ENCODE measurements at regions of chr11 and their contacts with region 1.

Region 1: GRCh38 chr11:46529095-46529905 is 64.5 kb downstream of the AMBRA1 start:
- DNase-seq: no peak
- ATAC-seq: peak; percentile 98
- H3K4me3 ChIP-seq: no peak overlapping the region
- H3K27ac ChIP-seq: 0 out of 2 replicates have a peak overlapping the region, but pooled peaks have one; percentile 4
- H3K4me1 ChIP-seq: no peaks in the 10 kb centered on the region; the same call in 1 of the 2 replicates
- H3K27me3 ChIP-seq: no peaks in the 10 kb centered on the region
- CTCF ChIP-seq: peak; percentile 88 to 94 (median 93); a peak in 5 of 6 replicates
- EP300 ChIP-seq: no peak
- POLR2A ChIP-seq: no peak
- RAD21 ChIP-seq: peak; percentile 70

Region 2: GRCh38 chr11:46352063-46352841 is 177.0 kb before region 1 on chr11:
- CTCF ChIA-PET with region 1: interaction called, 15 read pairs
- POLR2A ChIA-PET with region 1: no interaction called
- RAD21 ChIA-PET with region 1: interaction called, 3 read pairs
- SMC1A ChIA-PET with region 1: no interaction called
- in situ Hi-C with region 1: no loop called
- intact Hi-C with region 1: no loop called
- DNase-seq: no peak
- ATAC-seq: peak; percentile 29
- H3K4me3 ChIP-seq: no peak overlapping the region
- H3K27ac ChIP-seq: no peak overlapping the region
- H3K4me1 ChIP-seq: peaks cover 30% of the 10 kb centered on the region
- H3K27me3 ChIP-seq: no peaks in the 10 kb centered on the region
- CTCF ChIP-seq: peak; percentile 86 to 97 (median 87)
- EP300 ChIP-seq: no peak
- POLR2A ChIP-seq: no peak
- RAD21 ChIP-seq: peak; percentile 50

Region 3: GRCh38 chr11:46410021-46410420 is 119.3 kb before region 1 on chr11:
- CTCF ChIA-PET with region 1: interaction called, 12 read pairs
- POLR2A ChIA-PET with region 1: no interaction called
- RAD21 ChIA-PET with region 1: interaction called, 5 read pairs
- SMC1A ChIA-PET with region 1: interaction called, 7 read pairs
- in situ Hi-C with region 1: no loop called
- intact Hi-C with region 1: no loop called
- DNase-seq: no peak
- ATAC-seq: no peak
- H3K4me3 ChIP-seq: no peak overlapping the region
- H3K27ac ChIP-seq: no peak overlapping the region
- H3K4me1 ChIP-seq: no peaks in the 10 kb centered on the region
- H3K27me3 ChIP-seq: no peaks in the 10 kb centered on the region
- CTCF ChIP-seq: peak in 1 of 3 experiments; percentile 26; a peak in 1 of 6 replicates
- EP300 ChIP-seq: no peak
- POLR2A ChIP-seq: no peak
- RAD21 ChIP-seq: peak; percentile 8; the same call in 1 of the 2 replicates

Region 4: DNA sequence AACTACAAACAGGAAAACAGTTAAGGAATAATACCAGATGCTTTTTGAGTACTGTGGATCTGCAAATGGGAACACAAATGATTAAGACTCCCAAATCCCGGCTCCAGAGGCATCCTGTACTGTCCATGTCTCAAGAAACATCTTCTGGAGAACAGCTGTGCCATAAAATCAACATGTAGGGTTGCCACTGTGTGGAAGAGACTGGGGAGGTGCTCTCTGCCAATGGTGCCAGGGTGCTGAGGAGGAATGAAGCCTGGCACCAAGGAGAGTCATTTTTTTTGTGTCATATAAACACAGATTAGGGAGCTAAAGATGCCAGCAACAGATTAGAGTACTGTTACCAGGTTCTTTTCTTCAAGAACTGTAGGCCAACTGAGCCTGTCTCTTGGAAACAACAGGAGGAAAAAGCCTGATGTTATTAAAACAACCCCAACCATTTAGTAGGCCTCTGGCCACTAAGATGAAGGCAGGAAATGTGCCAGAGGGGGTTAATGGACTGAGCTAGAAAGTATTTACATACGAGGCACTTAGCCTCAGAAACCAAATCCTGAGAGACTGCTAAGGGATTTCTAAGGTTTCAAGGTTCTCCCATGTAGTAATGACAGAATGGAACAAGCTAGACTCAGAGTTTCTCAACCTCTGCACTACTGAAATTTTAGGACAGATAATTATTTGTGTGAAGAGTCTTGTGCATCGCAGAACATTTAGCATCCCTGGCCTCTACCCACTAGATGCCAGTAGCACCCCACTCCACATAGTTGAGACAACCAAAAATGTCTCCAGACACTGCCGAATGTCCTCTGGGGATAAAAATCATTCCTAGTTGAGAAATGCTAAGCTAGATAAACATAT is 83.2 kb before region 1 on chr11:
- CTCF ChIA-PET with region 1: interaction called, 41 read pairs
- POLR2A ChIA-PET with region 1: interaction called, 4 read pairs
- RAD21 ChIA-PET with region 1: interaction called, 16 read pairs
- SMC1A ChIA-PET with region 1: interaction called, 14 read pairs
- in situ Hi-C with region 1: no loop called
- intact Hi-C with region 1: loop called (anchors 1 kb)
- DNase-seq: no peak
- ATAC-seq: peak; percentile 54; the same call in 2 of the 3 replicates
- H3K4me3 ChIP-seq: no peak overlapping the region
- H3K27ac ChIP-seq: no peak overlapping the region
- H3K4me1 ChIP-seq: no peaks in the 10 kb centered on the region
- H3K27me3 ChIP-seq: no peaks in the 10 kb centered on the region
- CTCF ChIP-seq: peak; percentile 17 to 47 (median 41); a peak in 4 of 6 replicates
- EP300 ChIP-seq: no peak
- POLR2A ChIP-seq: no peak
- RAD21 ChIP-seq: peak; percentile 50

Region 5: GRCh38 chr11:46484101-46484500 is 45.2 kb before region 1 on chr11:
- CTCF ChIA-PET with region 1: interaction called, 146 read pairs
- POLR2A ChIA-PET with region 1: interaction called, 11 read pairs
- RAD21 ChIA-PET with region 1: interaction called, 67 read pairs
- SMC1A ChIA-PET with region 1: interaction called, 108 read pairs
- in situ Hi-C with region 1: no loop called
- intact Hi-C with region 1: no loop called
- DNase-seq: no peak
- ATAC-seq: no peak
- H3K4me3 ChIP-seq: no peak overlapping the region
- H3K27ac ChIP-seq: peak overlapping the region; percentile 41
- H3K4me1 ChIP-seq: peaks cover 3% of the 10 kb centered on the region
- H3K27me3 ChIP-seq: no peaks in the 10 kb centered on the region
- CTCF ChIP-seq: no peak
- EP300 ChIP-seq: no peak
- POLR2A ChIP-seq: no peak
- RAD21 ChIP-seq: no peak

Region 6: GRCh38 chr11:46547579-46547978 is 18.3 kb after region 1 on chr11:
- CTCF ChIA-PET with region 1: interaction called, 11 read pairs
- POLR2A ChIA-PET with region 1: no interaction called
- RAD21 ChIA-PET with region 1: no interaction called
- SMC1A ChIA-PET with region 1: interaction called, 3 read pairs
- in situ Hi-C with region 1: no loop called
- intact Hi-C with region 1: no loop called
- DNase-seq: no peak
- ATAC-seq: no peak
- H3K4me3 ChIP-seq: no peak overlapping the region
- H3K27ac ChIP-seq: no peak overlapping the region
- H3K4me1 ChIP-seq: no peaks in the 10 kb centered on the region
- H3K27me3 ChIP-seq: no peaks in the 10 kb centered on the region
- CTCF ChIP-seq: no peak
- EP300 ChIP-seq: no peak
- POLR2A ChIP-seq: no peak
- RAD21 ChIP-seq: no peak

Region 7: DNA sequence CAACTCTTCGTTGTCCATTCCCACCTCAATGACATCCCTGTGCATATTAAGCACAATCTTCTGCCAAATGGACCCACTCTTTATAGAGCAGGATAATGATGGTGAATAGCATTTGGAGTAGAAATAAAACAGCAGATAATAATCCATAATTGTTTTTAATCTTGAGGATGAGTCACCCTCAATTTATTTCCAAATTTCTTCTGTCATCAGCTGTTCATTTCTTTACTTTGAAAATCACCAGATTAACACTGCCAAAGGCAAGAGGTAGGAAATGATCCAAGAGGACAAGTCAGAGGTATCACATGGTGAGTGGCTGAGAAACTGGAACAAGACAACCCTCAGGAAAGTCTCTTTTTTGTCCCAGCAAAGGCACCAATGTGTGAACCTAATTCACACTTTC is 71.8 kb after region 1 on chr11:
- CTCF ChIA-PET with region 1: no interaction called
- POLR2A ChIA-PET with region 1: no interaction called
- RAD21 ChIA-PET with region 1: no interaction called
- SMC1A ChIA-PET with region 1: no interaction called
- in situ Hi-C with region 1: no loop called
- intact Hi-C with region 1: no loop called
- DNase-seq: no peak
- ATAC-seq: no peak
- H3K4me3 ChIP-seq: no peak overlapping the region
- H3K27ac ChIP-seq: no peak overlapping the region
- H3K4me1 ChIP-seq: peaks cover 16% of the 10 kb centered on the region
- H3K27me3 ChIP-seq: no peaks in the 10 kb centered on the region
- CTCF ChIP-seq: no peak
- EP300 ChIP-seq: no peak
- POLR2A ChIP-seq: no peak
- RAD21 ChIP-seq: no peak

Region 8: DNA sequence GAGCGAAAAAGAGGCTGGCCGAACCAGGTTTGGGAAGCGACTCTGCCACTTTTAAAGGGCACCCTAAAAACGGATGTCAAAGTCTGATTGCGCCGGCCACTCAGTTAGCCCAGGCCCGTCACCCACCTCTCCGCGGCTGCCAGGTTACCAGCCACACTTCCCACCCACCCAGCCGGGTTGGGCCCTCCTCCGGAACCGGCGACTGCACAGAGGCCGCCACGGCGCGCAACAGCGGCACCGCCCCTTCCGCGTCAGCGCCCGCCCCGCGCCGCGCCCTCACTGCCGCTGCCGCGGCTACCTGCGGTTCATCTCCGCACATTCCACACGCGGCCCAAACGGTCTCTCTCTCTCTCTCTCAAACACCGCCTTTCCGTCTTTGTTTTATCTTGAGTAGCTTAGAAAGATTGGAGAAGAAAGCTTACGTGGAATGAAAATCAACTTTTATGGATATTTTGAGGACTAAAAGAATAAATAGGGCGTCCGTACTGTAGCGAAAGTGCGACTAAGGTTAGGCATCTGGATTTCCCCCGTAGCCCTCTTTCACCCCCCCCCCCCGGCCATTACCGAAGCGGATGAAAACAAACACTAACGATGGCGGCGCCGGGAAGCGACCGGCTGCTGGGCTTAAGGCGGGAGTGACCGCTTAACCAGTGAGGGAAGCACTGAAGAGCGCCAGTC is 87.8 kb after region 1 on chr11 and contains the starts of genes ATG13 and HARBI1:
- CTCF ChIA-PET with region 1: interaction called, 15 read pairs
- POLR2A ChIA-PET with region 1: interaction called, 5 read pairs
- RAD21 ChIA-PET with region 1: interaction called, 4 read pairs
- SMC1A ChIA-PET with region 1: interaction called, 5 read pairs
- in situ Hi-C with region 1: no loop called
- intact Hi-C with region 1: no loop called
- DNase-seq: peak; percentile 55
- ATAC-seq: peak; percentile 98
- H3K4me3 ChIP-seq: peak within 1 kb of the TSS; percentile 82
- H3K27ac ChIP-seq: peak within 1 kb of the TSS; percentile 99
- H3K4me1 ChIP-seq: peaks cover 7% of the 10 kb centered on the region; the same call in 1 of the 2 replicates
- H3K27me3 ChIP-seq: no peaks in the 10 kb centered on the region
- CTCF ChIP-seq: no peak
- EP300 ChIP-seq: peak in 1 of 2 experiments; percentile 100; a peak in 2 of 4 replicates
- POLR2A ChIP-seq: peak; percentile 85
- RAD21 ChIP-seq: no peak
- polyA plus RNA-seq, gene ATG13: 10.9 to 13.6 TPM
- polyA plus RNA-seq, gene HARBI1: 5.1 to 7.5 TPM

Region 9: DNA sequence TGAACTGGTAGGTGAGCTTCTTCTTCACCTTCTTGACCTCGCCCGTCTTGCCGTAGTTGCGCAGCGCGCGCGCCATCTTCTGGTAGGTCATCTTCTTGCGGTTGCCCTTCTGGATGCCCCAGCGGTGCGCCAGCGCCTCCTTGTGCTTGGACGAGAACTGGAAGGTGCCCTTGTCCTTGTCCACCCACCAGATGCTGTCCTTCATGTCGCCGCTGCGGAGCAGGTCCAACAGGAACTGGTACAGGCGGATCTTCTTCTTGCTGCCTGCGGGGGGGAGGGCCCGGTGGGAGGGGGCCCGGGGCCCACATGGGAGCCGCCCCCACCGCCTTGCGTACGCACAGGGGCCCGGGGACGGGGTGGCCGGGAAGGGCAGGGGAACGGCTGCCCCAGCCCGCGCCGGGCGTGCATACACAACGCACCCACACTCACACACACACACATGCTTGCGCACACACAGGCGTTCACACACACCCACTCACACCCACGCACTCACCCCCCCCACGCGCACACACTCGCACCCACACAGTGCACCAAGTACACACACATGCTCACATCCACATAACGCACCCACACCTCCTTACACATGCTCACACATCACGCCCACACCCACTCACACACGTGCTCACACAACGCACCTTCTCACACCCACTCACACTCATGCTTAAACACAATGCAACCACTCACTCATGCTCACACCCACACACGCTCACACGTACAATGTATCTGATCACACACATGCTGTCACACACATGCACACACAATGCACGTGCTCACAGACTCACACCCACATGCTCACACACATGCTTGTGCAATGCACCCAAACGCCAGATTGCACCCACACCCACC is 826.2 kb after region 1 on chr11:
- CTCF ChIA-PET with region 1: no interaction called
- POLR2A ChIA-PET with region 1: no interaction called
- RAD21 ChIA-PET with region 1: no interaction called
- SMC1A ChIA-PET with region 1: no interaction called
- in situ Hi-C with region 1: no loop called
- intact Hi-C with region 1: no loop called
- DNase-seq: no peak
- ATAC-seq: no peak
- H3K4me3 ChIP-seq: no peak overlapping the region
- H3K27ac ChIP-seq: no peak overlapping the region
- H3K4me1 ChIP-seq: no peaks in the 10 kb centered on the region
- H3K27me3 ChIP-seq: no peaks in the 10 kb centered on the region
- CTCF ChIP-seq: peak; percentile 11 to 18 (median 16); a peak in 2 of 6 replicates
- EP300 ChIP-seq: no peak
- POLR2A ChIP-seq: no peak; the same call in 1 of the 2 replicates
- RAD21 ChIP-seq: peak; percentile 23; the same call in 1 of the 2 replicates

Measured in GM12878 (cell line).